Activated naive CD4-positive, alpha-beta T cell treated with anti-CD3 and anti-CD28 coated beads for 36 hours (primary cell): ENCODE measurements at regions of chr6 and their contacts with region 1.

Region 1: GRCh38 chr6:127516666-127517273 is 2.4 kb downstream of the MTCL3 start:
- DNase-seq: peak; percentile 66
- H3K4me3 Mint-ChIP-seq: peak overlapping the region; percentile 85
- H3K27ac Mint-ChIP-seq: peak overlapping the region; percentile 68
- H3K4me1 Mint-ChIP-seq: peaks cover 30% of the 10 kb centered on the region
- H3K27me3 Mint-ChIP-seq: peaks cover 33% of the 10 kb centered on the region

Region 2: GRCh38 chr6:125779924-125780539 is 1736.7 kb before region 1 on chr6:
- CTCF ChIA-PET with region 1: no interaction called
- intact Hi-C with region 1: loop called (anchors 5 kb)
- DNase-seq: peak; percentile 90
- H3K4me3 Mint-ChIP-seq: no peak overlapping the region
- H3K27ac Mint-ChIP-seq: no peak overlapping the region
- H3K4me1 Mint-ChIP-seq: peaks cover 15% of the 10 kb centered on the region
- H3K27me3 Mint-ChIP-seq: peaks cover 1% of the 10 kb centered on the region

Region 3: GRCh38 chr6:127302728-127303660 is 213.8 kb before region 1 on chr6:
- CTCF ChIA-PET with region 1: interaction called, 12 read pairs
- intact Hi-C with region 1: loop called (anchors 1 kb)
- DNase-seq: peak; percentile 72
- H3K4me3 Mint-ChIP-seq: no peak overlapping the region
- H3K27ac Mint-ChIP-seq: no peak overlapping the region
- H3K4me1 Mint-ChIP-seq: peaks cover 42% of the 10 kb centered on the region
- H3K27me3 Mint-ChIP-seq: no peaks in the 10 kb centered on the region

Region 4: DNA sequence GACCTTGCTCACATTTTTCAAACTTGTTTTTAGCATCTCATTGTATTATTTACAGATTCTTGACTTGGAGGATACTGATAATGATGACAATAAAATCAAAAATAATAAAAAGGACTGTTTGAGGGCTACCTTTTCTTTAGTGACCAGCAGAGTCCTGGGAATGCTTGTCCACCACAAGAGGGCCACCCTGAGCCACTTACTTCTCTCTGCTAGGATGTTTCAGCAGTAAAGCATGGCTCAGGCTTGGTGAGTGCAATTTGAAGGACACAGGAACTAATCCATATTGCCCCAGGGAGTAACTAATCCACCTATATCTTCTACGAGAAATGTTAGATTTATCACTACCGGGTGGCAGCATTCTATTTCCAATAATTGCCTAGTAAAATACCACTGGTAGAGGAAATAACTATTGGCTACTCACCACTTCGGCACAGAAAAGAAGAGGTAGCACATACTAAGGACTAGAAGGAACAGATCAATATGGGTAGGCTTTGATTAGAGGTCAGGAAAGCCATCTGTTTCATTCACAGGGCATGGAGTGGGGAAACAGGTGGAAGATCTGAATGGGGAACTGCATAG is 51.8 kb before region 1 on chr6:
- CTCF ChIA-PET with region 1: interaction called, 10 read pairs
- intact Hi-C with region 1: loop called (anchors 1 kb)
- DNase-seq: peak; percentile 83
- H3K4me3 Mint-ChIP-seq: no peak overlapping the region
- H3K27ac Mint-ChIP-seq: no peak overlapping the region
- H3K4me1 Mint-ChIP-seq: no peaks in the 10 kb centered on the region
- H3K27me3 Mint-ChIP-seq: no peaks in the 10 kb centered on the region

Region 5: GRCh38 chr6:127539272-127539671 is 22.5 kb after region 1 on chr6:
- CTCF ChIA-PET with region 1: interaction called, 47 read pairs
- intact Hi-C with region 1: loop called (anchors 1 kb)
- DNase-seq: no peak
- H3K4me3 Mint-ChIP-seq: no peak overlapping the region
- H3K27ac Mint-ChIP-seq: no peak overlapping the region
- H3K4me1 Mint-ChIP-seq: no peaks in the 10 kb centered on the region
- H3K27me3 Mint-ChIP-seq: peaks cover 13% of the 10 kb centered on the region

Region 6: DNA sequence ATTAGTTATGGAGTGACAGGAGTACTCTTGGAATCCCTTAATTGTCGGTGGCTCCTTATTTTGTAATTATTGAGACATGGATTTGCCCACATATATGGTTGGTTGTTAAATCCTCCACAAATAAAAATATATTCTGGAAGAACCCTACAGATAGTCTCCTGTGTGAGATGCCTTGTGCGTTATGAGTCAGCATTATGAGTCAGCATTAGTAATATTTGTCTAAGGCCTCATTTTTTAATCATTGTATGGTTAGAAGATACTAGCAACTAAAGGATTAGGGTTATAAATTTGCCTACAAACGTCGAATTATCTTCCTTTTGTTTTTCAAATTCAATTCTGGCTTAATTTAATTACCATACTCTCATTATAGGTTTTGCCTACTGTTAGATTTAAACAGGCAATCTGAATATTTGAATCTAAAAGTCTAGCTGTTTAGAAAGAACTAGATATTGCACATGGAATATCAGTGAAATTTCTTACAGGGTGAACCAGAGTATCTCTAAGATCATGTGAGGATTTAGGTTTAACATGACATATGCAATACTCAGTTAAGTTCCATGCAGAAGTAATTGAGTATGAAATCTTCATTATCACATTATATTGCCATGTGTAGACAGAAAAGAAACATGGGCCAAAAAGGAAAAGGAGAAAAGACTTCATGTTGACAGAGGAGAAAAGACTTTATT is 66.2 kb after region 1 on chr6:
- CTCF ChIA-PET with region 1: no interaction called
- intact Hi-C with region 1: no loop called
- DNase-seq: no peak
- H3K4me3 Mint-ChIP-seq: no peak overlapping the region
- H3K27ac Mint-ChIP-seq: no peak overlapping the region
- H3K4me1 Mint-ChIP-seq: peaks cover 1% of the 10 kb centered on the region
- H3K27me3 Mint-ChIP-seq: peaks cover 4% of the 10 kb centered on the region

Region 7: DNA sequence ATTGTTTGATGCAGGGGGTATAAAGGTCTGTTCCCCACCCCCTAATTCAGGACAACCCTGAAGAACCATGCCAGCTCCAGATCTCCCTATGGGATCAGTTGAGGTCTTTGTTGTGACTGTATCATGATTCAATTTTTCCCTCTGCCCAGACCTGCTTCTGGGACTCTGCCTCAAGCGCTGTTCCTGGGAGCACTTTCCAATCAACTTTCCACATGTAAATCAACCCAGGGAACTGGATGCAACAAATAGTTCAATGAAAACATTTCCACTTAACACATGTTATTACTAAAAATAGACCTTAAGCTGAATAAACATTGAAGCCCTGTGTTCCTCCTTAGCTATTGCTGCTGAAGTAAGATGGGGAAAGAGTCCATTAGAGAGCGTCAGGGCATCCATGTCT is 199.7 kb after region 1 on chr6:
- CTCF ChIA-PET with region 1: no interaction called
- intact Hi-C with region 1: no loop called
- DNase-seq: no peak
- H3K4me3 Mint-ChIP-seq: no peak overlapping the region
- H3K27ac Mint-ChIP-seq: no peak overlapping the region
- H3K4me1 Mint-ChIP-seq: peaks cover 2% of the 10 kb centered on the region
- H3K27me3 Mint-ChIP-seq: no peaks in the 10 kb centered on the region

Region 8: DNA sequence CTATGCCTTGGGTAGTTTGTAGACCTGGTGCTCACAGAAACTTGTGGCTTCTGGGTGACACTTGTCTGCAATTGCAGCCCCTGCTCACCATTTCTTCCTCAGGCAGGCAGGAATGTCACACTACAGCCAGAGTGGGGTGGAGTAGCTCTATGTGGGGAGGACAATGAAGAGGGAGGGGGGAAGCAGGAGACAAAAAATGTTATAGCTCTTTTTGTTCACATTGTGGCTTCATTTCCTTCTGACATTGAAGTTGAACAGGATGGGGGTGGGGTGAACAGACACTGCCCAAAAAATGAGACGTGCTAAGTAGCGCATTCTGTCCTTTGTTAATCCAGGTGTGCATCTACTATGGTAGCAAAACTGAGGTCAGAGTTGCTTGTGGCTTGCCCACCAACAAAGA is 384.2 kb after region 1 on chr6 and contains the start of gene THEMIS:
- CTCF ChIA-PET with region 1: no interaction called
- intact Hi-C with region 1: loop called (anchors 5 kb)
- DNase-seq: peak; percentile 52
- H3K4me3 Mint-ChIP-seq: peak within 1 kb of the TSS; percentile 81
- H3K27ac Mint-ChIP-seq: peak within 1 kb of the TSS; percentile 94
- H3K4me1 Mint-ChIP-seq: peaks cover 57% of the 10 kb centered on the region
- H3K27me3 Mint-ChIP-seq: no peaks in the 10 kb centered on the region
- total RNA-seq, gene THEMIS: 7.0 to 7.4 TPM

Region 9: GRCh38 chr6:128350416-128351254 is 833.9 kb after region 1 on chr6:
- CTCF ChIA-PET with region 1: no interaction called
- intact Hi-C with region 1: no loop called
- DNase-seq: no peak
- H3K4me3 Mint-ChIP-seq: no peak overlapping the region
- H3K27ac Mint-ChIP-seq: no peak overlapping the region
- H3K4me1 Mint-ChIP-seq: peaks cover 2% of the 10 kb centered on the region
- H3K27me3 Mint-ChIP-seq: no peaks in the 10 kb centered on the region

Region 10: GRCh38 chr6:128713461-128713860 is 1196.7 kb after region 1 on chr6:
- CTCF ChIA-PET with region 1: no interaction called
- intact Hi-C with region 1: no loop called
- DNase-seq: no peak
- H3K4me3 Mint-ChIP-seq: no peak overlapping the region
- H3K27ac Mint-ChIP-seq: no peak overlapping the region
- H3K4me1 Mint-ChIP-seq: no peaks in the 10 kb centered on the region
- H3K27me3 Mint-ChIP-seq: peaks cover 19% of the 10 kb centered on the region